Activated naive CD4-positive, alpha-beta T cell treated with anti-CD3 and anti-CD28 coated beads, Interleukin-2, amount 10 ng/mL, durations not matched to agents 7 days and 5 days (primary cell): ENCODE measurements at regions of chr3 and their contacts with region 1.

Region 1: GRCh38 chr3:171566803-171567422 is 106.7 kb upstream of the TNIK start:
- DNase-seq: no peak
- H3K4me3 Mint-ChIP-seq: no peak overlapping the region
- H3K27ac Mint-ChIP-seq: no peak overlapping the region
- H3K4me1 Mint-ChIP-seq: peaks cover 36% of the 10 kb centered on the region
- H3K27me3 Mint-ChIP-seq: peaks cover 23% of the 10 kb centered on the region

Region 2: DNA sequence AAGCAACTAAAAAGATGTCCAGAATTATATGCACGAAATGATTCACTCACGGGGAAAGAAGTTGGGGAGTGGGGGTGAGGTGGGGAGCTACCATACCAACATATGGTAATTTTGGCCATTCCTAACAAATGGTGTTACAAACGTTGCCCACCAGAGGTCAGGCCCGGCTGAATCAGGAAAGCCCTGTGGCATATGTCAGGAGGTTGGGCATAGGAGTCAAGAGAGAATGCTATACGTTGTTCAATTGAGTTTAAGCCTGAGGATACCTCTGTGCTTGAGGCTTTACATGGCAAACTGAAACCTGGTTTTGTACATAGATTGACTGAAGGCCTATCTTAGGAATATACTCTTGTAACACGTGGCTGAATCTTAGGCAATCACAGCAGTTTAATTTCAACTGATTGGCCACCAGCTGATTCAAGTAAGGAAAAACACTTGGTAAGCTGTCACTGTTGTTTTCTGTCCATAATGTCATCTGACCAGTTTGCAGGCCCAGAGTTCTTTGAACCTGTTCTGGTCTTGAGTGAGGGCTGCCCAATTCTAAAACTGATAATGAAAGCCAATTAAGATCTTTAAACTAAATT is 517.0 kb before region 1 on chr3:
- CTCF ChIA-PET with region 1: interaction called, 11 read pairs
- DNase-seq: peak; percentile 65
- H3K4me3 Mint-ChIP-seq: no peak overlapping the region
- H3K27ac Mint-ChIP-seq: no peak overlapping the region
- H3K4me1 Mint-ChIP-seq: no peaks in the 10 kb centered on the region
- H3K27me3 Mint-ChIP-seq: peaks cover 25% of the 10 kb centered on the region

Region 3: DNA sequence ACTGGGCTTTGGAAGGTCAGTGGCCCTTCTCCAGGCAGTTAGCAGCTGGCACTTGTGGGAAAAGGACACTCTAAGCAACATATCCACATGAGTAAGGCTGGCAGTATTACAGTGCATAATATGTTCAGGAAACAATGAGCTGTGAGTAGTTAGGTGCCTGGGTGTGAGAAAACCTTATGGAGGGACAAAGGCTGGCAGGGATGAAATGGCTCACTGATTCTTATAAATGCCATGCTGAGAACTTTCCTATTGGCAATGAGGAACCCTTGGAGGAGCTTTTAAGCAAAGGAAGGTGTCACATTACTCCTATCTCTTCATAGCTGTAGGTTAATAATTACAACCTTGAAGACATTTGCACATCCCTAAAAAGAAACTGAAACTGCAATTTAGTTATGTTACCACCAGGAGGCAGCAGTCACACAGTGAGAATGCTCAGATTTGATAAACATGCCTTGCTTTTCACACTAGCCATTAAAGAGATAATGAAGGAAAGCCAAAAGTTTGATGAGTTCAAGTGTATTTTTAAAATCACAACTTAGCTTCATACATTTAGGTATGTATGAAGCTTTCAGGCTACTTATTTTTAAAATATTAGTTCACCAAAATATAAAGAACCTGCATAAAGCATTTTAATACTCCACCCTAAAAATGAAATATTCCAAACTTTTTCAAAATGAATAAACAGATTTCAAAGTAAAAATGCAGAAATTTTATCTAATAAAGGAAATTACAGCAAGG is 403.8 kb before region 1 on chr3:
- CTCF ChIA-PET with region 1: interaction called, 34 read pairs
- DNase-seq: peak; percentile 32
- H3K4me3 Mint-ChIP-seq: no peak overlapping the region
- H3K27ac Mint-ChIP-seq: peak overlapping the region; percentile 64
- H3K4me1 Mint-ChIP-seq: peaks cover 23% of the 10 kb centered on the region
- H3K27me3 Mint-ChIP-seq: no peaks in the 10 kb centered on the region

Region 4: GRCh38 chr3:171516765-171517164 is 50.1 kb before region 1 on chr3:
- CTCF ChIA-PET with region 1: interaction called, 12 read pairs
- DNase-seq: no peak
- H3K4me3 Mint-ChIP-seq: no peak overlapping the region
- H3K27ac Mint-ChIP-seq: no peak overlapping the region
- H3K4me1 Mint-ChIP-seq: no peaks in the 10 kb centered on the region
- H3K27me3 Mint-ChIP-seq: peaks cover 15% of the 10 kb centered on the region

Region 5: GRCh38 chr3:171584100-171584499 is 17.2 kb after region 1 on chr3:
- CTCF ChIA-PET with region 1: no interaction called
- DNase-seq: no peak
- H3K4me3 Mint-ChIP-seq: no peak overlapping the region
- H3K27ac Mint-ChIP-seq: no peak overlapping the region
- H3K4me1 Mint-ChIP-seq: no peaks in the 10 kb centered on the region
- H3K27me3 Mint-ChIP-seq: no peaks in the 10 kb centered on the region